IMR-90 (cell line): ENCODE measurements at regions of chr19 and their contacts with region 1.

Region 1: GRCh38 chr19:17226002-17226933 is at the start of gene OCEL1:
- DNase-seq: peak; percentile 95
- ATAC-seq: peak; percentile 96
- H3K4me3 ChIP-seq: peak within 1 kb of the TSS; percentile 94
- H3K27ac ChIP-seq: peak within 1 kb of the TSS; percentile 84
- H3K4me1 ChIP-seq: peaks cover 3% of the 10 kb centered on the region
- H3K27me3 ChIP-seq: no peaks in the 10 kb centered on the region
- CTCF ChIP-seq: no peak
- POLR2A ChIP-seq: peak; percentile 58
- RAD21 ChIP-seq: no peak
- total RNA-seq, gene OCEL1: 0.83 and 1.1 TPM in 2 replicates

Region 2: DNA sequence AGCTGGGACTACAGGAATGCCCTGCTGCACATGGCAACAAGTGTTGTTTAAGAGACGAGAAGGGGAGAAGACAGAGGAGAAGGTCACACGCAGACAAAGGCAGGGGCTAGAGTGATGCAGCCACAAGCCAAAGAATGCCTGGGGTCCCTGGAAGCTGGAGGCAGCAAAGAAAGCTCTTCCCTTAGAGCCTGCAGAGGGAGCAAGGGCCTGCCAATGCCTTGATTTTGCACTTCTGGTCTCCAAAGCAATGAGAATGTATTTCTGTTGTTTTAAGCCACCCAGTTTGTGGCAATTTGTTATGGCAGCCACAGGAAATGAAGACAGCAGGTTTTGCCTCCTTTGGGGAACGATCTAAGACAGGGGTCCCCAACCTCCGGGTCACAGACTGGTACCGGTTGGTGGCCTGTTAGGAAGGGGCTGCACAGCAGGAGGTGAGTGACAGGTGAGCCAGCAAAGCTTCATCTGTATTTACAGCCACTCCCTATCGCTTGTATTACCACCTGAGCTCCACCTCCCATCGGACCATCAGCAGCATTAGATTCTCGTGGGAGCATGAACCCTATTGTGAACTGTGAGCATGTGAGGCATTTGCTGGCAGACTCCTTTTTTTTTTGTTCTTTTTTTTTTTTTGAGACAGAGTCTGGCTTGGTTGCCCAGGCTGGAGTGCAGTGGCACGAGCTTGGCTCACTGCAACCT is 315.4 kb before region 1 on chr19:
- CTCF ChIA-PET with region 1: no interaction called
- POLR2A ChIA-PET with region 1: no interaction called
- dilution Hi-C with region 1: no loop called
- in situ Hi-C with region 1: no loop called
- intact Hi-C with region 1: no loop called
- DNase-seq: no peak
- ATAC-seq: no peak
- H3K4me3 ChIP-seq: no peak overlapping the region
- H3K27ac ChIP-seq: no peak overlapping the region
- H3K4me1 ChIP-seq: no peaks in the 10 kb centered on the region
- H3K27me3 ChIP-seq: no peaks in the 10 kb centered on the region; the same call in 1 of the 2 replicates
- CTCF ChIP-seq: no peak
- POLR2A ChIP-seq: no peak
- RAD21 ChIP-seq: no peak

Region 3: GRCh38 chr19:17243990-17244385 is 17.7 kb after region 1 on chr19:
- CTCF ChIA-PET with region 1: no interaction called
- POLR2A ChIA-PET with region 1: no interaction called
- dilution Hi-C with region 1: no loop called
- in situ Hi-C with region 1: no loop called
- intact Hi-C with region 1: no loop called
- DNase-seq: peak; percentile 20
- ATAC-seq: peak; percentile 7; the same call in 1 of the 2 replicates
- H3K4me3 ChIP-seq: peak overlapping the region; percentile 90
- H3K27ac ChIP-seq: peak overlapping the region; percentile 69
- H3K4me1 ChIP-seq: peaks cover 10% of the 10 kb centered on the region
- H3K27me3 ChIP-seq: no peaks in the 10 kb centered on the region
- CTCF ChIP-seq: no peak
- POLR2A ChIP-seq: no peak
- RAD21 ChIP-seq: no peak

Region 4: GRCh38 chr19:17255150-17255621 is 28.9 kb after region 1 on chr19:
- CTCF ChIA-PET with region 1: no interaction called
- POLR2A ChIA-PET with region 1: interaction called, 10 read pairs
- dilution Hi-C with region 1: no loop called
- in situ Hi-C with region 1: no loop called
- intact Hi-C with region 1: no loop called
- DNase-seq: no peak
- ATAC-seq: no peak
- H3K4me3 ChIP-seq: no peak overlapping the region
- H3K27ac ChIP-seq: no peak overlapping the region
- H3K4me1 ChIP-seq: no peaks in the 10 kb centered on the region
- H3K27me3 ChIP-seq: no peaks in the 10 kb centered on the region; the same call in 1 of the 2 replicates
- CTCF ChIP-seq: no peak
- POLR2A ChIP-seq: no peak
- RAD21 ChIP-seq: no peak